ENCODE measurements at regions of chr18 and their contacts with region 1.

Region 1: DNA sequence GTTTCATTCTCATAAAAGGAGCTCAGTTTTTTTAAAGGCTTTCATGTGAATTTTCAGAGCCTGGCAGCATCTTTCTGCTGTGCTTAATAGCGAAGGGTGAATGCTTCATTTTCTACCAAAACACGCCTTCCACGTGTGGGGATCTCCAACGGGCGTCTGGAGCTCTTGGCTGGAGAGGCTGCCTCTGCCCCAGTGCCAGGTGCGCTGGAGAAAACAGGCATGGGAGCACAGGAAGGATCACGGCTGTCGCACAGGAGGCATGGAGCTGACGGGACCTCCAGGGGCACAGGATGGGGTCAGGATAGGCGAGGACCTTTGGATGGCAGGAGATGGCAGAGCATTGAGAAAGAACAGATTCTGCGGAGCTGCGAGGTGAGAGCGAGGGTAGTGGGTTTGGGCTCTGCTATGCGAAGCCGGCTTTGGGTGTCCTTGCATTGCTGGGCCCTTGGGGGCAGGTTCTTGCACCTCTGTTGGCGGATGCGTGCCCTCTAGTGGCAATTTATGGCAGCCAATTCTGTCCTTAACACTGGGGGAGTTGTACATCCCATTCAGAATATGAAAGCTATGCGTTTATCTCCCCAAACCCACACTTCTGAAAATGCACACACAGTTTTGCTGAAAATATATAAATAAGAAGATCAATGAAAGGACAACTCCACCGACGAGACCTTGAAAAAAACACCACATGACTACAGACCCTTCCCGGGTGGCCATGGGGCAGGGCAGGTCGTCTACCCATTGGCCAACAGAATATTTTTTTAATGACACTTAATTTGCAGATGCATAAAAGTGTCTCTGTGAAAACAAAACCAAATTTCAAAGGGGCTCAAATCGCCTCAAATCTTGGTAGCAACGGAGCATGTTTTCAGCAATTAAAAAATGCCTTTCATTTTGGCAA is 90.4 kb upstream of the SLC35G4 start:
- DNase-seq: peak; percentile 50 to 62
- ATAC-seq: peak; percentile 82 to 93
- H3K4me3 ChIP-seq: no peak overlapping the region
- H3K27ac ChIP-seq: no peak overlapping the region
- H3K4me1 ChIP-seq: peaks cover 4% of the 10 kb centered on the region; the same call in 1 of the 3 replicates
- CTCF ChIP-seq: peak; percentile 55
- EP300 ChIP-seq: no peak
- POLR2A ChIP-seq: no peak
- RAD21 ChIP-seq: peak; percentile 54 to 59

Region 2: GRCh38 chr18:11498821-11499220 is 20.2 kb before region 1 on chr18:
- CTCF ChIA-PET with region 1: no interaction called
- POLR2A ChIA-PET with region 1: no interaction called
- DNase-seq: no peak
- ATAC-seq: no peak
- H3K4me3 ChIP-seq: no peak overlapping the region
- H3K27ac ChIP-seq: peak overlapping the region; percentile 71 to 90; a peak in 4 of 6 replicates
- H3K4me1 ChIP-seq: peaks cover 56% of the 10 kb centered on the region
- CTCF ChIP-seq: no peak
- EP300 ChIP-seq: no peak
- POLR2A ChIP-seq: no peak
- RAD21 ChIP-seq: no peak

Region 3: DNA sequence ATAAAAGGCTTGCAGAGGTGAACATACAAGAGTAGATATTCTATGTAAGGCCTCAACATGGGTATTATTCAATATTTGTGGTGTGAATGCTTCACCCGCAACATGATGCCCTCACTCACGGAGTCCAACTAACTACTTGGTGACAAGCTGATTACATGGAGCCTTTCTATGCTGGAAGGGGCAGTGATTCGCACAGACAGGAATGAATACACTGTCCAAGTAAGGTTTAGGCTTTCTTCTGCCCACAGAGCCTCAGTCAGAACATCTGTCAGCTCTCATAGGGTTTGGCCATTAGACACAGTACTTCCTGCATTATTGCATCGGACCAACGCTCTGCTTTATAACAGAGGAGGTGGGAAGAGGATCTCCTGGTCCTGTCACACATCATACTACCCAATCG is 10.0 kb after region 1 on chr18:
- CTCF ChIA-PET with region 1: interaction called, 17 read pairs
- POLR2A ChIA-PET with region 1: no interaction called
- DNase-seq: no peak
- ATAC-seq: no peak
- H3K4me3 ChIP-seq: no peak overlapping the region
- H3K27ac ChIP-seq: no peak overlapping the region
- H3K4me1 ChIP-seq: no peaks in the 10 kb centered on the region
- CTCF ChIP-seq: no peak
- EP300 ChIP-seq: no peak
- POLR2A ChIP-seq: no peak
- RAD21 ChIP-seq: no peak

Region 4: GRCh38 chr18:11654736-11655605 is 135.9 kb after region 1 on chr18:
- CTCF ChIA-PET with region 1: no interaction called
- POLR2A ChIA-PET with region 1: no interaction called
- DNase-seq: peak; percentile 37 to 65
- ATAC-seq: peak; percentile 88 to 93
- H3K4me3 ChIP-seq: 0 out of 3 replicates have a peak overlapping the region, but pooled peaks have one; percentile 29
- H3K27ac ChIP-seq: 0 out of 6 replicates have a peak overlapping the region, but pooled peaks of 1 of the 2 experiments have one; percentile 18
- H3K4me1 ChIP-seq: no peaks in the 10 kb centered on the region
- CTCF ChIP-seq: peak; percentile 78
- EP300 ChIP-seq: no peak
- POLR2A ChIP-seq: no peak
- RAD21 ChIP-seq: peak; percentile 76 to 84

Measured in A549 (cell line).